Activated CD8-positive, alpha-beta memory T cell treated with anti-CD3 and anti-CD28 coated beads, Interleukin-2, amount 10 ng/mL, durations not matched to agents 7 days and 5 days (primary cell): ENCODE measurements at regions of chr19 and their contacts with region 1.

Region 1: GRCh38 chr19:10543420-10544241 is at the start of gene ATG4D:
- DNase-seq: peak; percentile 84
- ATAC-seq: peak; percentile 88
- H3K4me3 Mint-ChIP-seq: peak within 1 kb of the TSS; percentile 93
- H3K27ac Mint-ChIP-seq: peak within 1 kb of the TSS; percentile 93
- H3K4me1 Mint-ChIP-seq: peaks cover 16% of the 10 kb centered on the region
- H3K27me3 Mint-ChIP-seq: peaks cover 16% of the 10 kb centered on the region
- total RNA-seq, gene ATG4D: 48.3 to 57.8 TPM

Region 2: DNA sequence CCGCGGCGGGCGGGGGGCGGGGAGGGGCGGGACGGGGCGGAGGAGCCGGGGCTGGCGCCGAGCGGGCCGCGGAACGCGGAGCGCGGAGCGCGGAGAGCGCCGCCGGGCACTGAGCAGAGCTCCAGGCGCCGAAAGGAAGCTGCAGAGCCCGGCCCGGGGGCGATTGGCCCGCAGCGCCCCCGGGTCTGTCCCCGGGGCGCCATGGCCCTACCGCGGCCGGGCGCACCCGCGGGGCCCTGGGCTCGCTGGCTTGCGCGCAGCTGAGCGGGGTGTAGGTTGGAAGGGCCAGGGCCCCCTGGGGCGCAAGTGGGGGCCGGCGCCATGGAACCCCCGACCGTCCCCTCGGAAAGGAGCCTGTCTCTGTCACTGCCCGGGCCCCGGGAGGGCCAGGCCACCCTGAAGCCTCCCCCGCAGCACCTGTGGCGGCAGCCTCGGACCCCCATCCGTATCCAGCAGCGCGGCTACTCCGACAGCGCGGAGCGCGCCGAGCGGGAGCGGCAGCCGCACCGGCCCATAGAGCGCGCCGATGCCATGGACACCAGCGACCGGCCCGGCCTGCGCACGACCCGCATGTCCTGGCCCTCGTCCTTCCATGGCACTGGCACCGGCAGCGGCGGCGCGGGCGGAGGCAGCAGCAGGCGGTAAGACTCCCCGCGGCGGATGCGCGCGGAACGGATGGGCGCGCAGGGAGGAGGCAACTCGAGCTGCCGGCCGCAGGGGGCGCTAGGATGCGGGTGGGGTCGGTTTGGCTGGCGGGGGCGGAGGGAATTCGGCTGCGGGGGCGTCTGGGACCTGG is 123.0 kb before region 1 on chr19 and contains the start of gene PDE4A:
- CTCF ChIA-PET with region 1: no interaction called
- DNase-seq: peak; percentile 89
- ATAC-seq: peak; percentile 12
- H3K4me3 Mint-ChIP-seq: peak within 1 kb of the TSS; percentile 85
- H3K27ac Mint-ChIP-seq: peak within 1 kb of the TSS; percentile 84
- H3K4me1 Mint-ChIP-seq: peaks cover 75% of the 10 kb centered on the region
- H3K27me3 Mint-ChIP-seq: peaks cover 4% of the 10 kb centered on the region
- total RNA-seq, gene PDE4A: 74.9 to 103 TPM

Region 3: DNA sequence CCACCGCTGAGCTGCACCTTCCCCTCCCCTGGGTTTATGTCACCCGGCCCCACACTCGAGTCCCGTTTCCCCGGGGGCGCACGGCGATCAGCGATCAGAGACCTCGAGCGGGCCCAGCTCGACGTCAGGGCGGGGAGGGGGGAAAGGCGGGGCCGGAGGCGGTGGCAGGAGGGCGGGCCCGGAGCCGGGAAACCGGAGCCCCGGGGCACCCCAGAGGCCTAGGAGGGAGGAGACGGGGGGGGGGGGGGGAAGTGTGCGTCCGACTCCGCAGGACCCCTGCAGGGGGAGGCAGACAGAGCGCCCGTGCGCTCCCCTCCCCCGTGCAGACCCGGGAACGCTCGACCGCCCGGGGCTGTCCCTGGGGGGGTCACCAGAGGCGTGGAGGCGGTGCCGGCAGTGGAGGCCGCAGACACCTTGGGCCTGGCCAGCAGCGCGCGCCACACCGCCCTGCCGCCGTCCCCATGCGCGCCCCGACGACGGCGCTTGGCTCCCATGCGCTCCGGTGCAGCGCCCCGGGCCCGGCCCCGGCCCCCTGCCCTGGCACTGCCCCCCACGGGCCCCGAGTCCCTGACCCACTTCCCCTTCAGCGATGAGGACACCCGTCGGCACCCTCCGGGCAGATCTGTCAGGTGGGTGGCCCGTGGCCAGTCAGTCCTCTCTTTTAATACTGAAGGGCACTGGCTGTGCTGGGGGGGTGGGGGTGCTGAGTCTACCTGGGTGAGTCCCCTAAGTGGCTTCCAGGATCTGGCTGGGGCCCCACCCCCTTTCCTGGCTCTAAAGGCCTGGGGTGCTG is 111.5 kb before region 1 on chr19:
- CTCF ChIA-PET with region 1: no interaction called
- DNase-seq: peak; percentile 75
- ATAC-seq: peak; percentile 49
- H3K4me3 Mint-ChIP-seq: peak overlapping the region; percentile 80
- H3K27ac Mint-ChIP-seq: peak overlapping the region; percentile 96
- H3K4me1 Mint-ChIP-seq: peaks cover 75% of the 10 kb centered on the region
- H3K27me3 Mint-ChIP-seq: peaks cover 6% of the 10 kb centered on the region

Region 4: DNA sequence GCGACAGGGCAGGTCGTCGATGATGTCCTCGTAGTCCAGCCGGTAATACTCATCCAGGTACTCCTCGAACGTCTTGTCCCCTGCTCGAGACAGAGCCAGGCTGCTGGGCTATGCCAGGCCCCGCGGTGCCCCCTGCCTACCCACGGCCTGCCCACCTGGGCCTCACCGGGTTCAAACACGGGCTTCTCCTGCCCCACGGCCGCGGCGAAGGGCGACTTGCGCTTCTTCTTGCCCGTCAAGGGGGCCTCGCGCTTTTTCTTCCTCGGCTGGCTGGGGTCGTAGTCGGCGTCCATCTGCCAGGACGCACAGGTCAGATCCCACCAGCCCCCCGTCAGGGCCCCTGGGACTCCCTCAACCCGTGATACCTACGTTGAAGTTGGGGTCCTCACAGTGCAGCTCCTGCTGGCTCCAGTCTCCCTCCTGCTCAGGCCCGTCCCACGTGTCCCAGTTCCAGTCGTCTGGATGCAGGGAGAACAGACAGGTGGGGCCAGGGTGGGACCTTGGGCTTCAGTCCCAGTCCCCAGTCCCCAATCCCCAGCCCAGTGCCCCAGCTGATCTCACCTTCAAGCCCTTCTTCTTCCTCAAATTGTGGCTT is 14.1 kb after region 1 on chr19:
- CTCF ChIA-PET with region 1: interaction called, 36 read pairs
- DNase-seq: no peak
- ATAC-seq: no peak
- H3K4me3 Mint-ChIP-seq: no peak overlapping the region
- H3K27ac Mint-ChIP-seq: peak overlapping the region; percentile 62
- H3K4me1 Mint-ChIP-seq: peaks cover 40% of the 10 kb centered on the region
- H3K27me3 Mint-ChIP-seq: no peaks in the 10 kb centered on the region

Region 5: DNA sequence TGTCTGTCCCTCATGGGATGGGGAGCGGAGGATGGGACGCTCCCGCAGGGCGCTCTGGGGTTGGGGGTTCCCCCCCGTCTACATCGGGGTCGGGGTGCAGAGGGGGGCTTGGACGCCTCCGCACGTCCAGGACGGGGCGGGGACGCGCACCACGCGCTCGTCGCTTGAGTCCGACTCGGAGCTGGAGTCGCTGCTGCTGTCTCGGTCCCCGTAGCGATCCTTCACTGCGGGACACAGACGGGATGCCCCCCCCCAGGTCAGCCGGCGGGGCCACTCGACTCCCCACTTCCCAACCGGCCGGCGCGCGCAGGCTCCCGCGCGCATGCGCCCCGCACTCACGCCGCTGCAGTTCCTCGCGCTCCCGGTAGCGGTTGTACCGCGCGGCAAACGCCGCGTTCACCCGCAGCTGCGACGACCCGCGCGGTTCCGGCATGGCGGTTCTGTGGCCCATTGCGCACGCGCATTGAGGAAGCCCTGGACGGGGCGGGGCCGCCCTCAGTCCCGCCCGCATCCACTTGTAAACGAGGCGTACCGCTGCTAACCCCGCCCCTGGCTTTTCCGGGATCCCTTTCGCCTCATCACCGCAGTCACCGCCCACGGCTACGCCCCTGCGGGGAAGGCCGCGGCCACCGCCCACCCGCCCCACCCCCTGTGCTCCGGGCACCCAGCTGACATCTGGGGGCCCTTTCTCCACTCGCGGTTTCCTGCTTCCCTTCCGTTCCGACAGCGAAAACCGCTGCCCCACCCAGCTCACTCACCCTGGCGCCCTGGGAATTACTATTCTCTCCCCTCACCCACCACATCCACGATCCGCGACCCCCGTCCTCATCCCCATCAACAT is 22.2 kb after region 1 on chr19 and contains the start of gene KRI1:
- CTCF ChIA-PET with region 1: interaction called, 57 read pairs
- DNase-seq: peak; percentile 99
- ATAC-seq: peak; percentile 48
- H3K4me3 Mint-ChIP-seq: peak within 1 kb of the TSS; percentile 96
- H3K27ac Mint-ChIP-seq: peak within 1 kb of the TSS; percentile 93
- H3K4me1 Mint-ChIP-seq: peaks cover 40% of the 10 kb centered on the region
- H3K27me3 Mint-ChIP-seq: no peaks in the 10 kb centered on the region
- total RNA-seq, gene KRI1: 68.1 to 72.2 TPM